Activated CD8-positive, alpha-beta T cell treated with anti-CD3 and anti-CD28 coated beads, Interleukin-2, amount 10 ng/mL, durations not matched to agents 7 days and 5 days (primary cell): ENCODE measurements at regions of chr2 and their contacts with region 1.

Region 1: DNA sequence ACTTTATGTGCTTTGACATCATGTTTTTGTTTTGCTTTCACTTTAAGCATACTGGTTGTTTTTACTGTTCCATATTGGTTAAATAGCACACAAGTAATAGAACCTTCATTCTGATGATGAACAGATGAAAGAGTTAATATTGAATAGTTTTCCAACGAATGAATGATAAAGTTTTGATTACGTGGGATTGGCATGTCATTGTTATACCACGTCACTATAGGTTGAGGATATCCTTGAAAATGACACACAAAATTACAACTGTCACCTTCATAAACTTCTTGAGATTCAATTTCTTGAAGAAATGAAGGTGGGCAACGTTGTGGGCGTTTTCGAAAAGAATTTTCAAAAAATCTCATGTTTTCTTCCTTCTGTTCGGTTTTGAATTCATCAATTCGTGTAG is 57.0 kb downstream of the TTN start:
- DNase-seq: no peak
- ATAC-seq: no peak
- H3K4me3 Mint-ChIP-seq: no peak overlapping the region
- H3K27ac Mint-ChIP-seq: no peak overlapping the region
- H3K4me1 Mint-ChIP-seq: peaks cover 7% of the 10 kb centered on the region
- H3K27me3 Mint-ChIP-seq: no peaks in the 10 kb centered on the region

Region 2: GRCh38 chr2:178761759-178762371 is 11.6 kb after region 1 on chr2:
- CTCF ChIA-PET with region 1: interaction called, 14 read pairs
- POLR2A ChIA-PET with region 1: no interaction called
- DNase-seq: peak; percentile 56
- ATAC-seq: peak; percentile 39
- H3K4me3 Mint-ChIP-seq: no peak overlapping the region
- H3K27ac Mint-ChIP-seq: no peak overlapping the region
- H3K4me1 Mint-ChIP-seq: peaks cover 2% of the 10 kb centered on the region
- H3K27me3 Mint-ChIP-seq: no peaks in the 10 kb centered on the region